ENCODE measurements at regions of chr9 and their contacts with region 1.

Region 1: DNA sequence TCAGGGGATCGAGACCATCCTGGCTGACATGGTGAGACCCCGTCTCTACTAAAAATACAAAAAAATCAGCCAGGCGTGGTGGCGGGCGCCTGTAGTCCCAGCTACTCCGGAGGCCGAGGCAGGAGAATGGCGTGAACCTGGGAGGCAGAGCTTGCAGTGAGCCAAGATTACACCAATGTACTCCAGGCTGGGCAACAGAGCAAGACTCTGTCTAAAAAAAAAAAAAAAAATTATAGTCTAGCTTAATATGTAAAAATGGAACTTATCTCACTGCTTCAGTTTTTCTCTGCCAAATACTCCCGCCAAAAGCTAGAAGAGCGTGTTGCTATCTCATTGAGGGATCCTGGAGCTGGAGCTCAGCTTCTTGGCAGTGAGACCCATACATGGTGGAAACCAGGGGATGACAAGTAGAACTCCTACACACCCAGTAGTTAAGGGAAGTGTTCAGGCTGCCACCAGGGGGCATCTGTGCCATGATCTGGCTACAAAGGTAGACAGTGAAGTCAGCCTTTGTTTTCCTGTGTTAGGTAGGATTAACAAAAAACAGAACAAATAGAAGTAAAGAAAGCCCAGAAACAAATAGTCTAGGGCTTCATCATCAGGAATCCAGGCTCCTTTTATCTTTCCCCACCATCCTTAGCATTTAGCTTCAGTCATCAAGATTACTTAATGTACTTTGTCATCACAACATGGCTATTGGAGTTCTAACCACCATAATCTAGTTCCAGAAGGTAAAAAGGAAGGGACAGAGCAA is 33.6 kb upstream of the GLIPR2 start:
- DNase-seq: peak; percentile 73 to 92 (median 85)
- ATAC-seq: peak; percentile 99 to 100 (median 100)
- H3K4me3 ChIP-seq: no peak overlapping the region
- H3K4me3 Mint-ChIP-seq: no peak overlapping the region
- H3K27ac ChIP-seq: no peak overlapping the region
- H3K27ac Mint-ChIP-seq: peak overlapping the region in 1 of 2 donors; percentile 16
- H3K4me1 ChIP-seq: no peaks in the 10 kb centered on the region
- H3K4me1 Mint-ChIP-seq: peaks cover 7 to 12% (median 7%) of the 10 kb centered on the region in 3 donors
- H3K27me3 ChIP-seq: no peaks in the 10 kb centered on the region
- H3K27me3 Mint-ChIP-seq: no peaks in the 10 kb centered on the region

Region 2: GRCh38 chr9:35566417-35566816 is 536.5 kb before region 1 on chr9:
- CTCF ChIA-PET with region 1: no interaction called
- POLR2A ChIA-PET with region 1: no interaction called
- DNase-seq: no peak
- ATAC-seq: no peak
- H3K4me3 ChIP-seq: no peak overlapping the region
- H3K4me3 Mint-ChIP-seq: no peak overlapping the region
- H3K27ac ChIP-seq: no peak overlapping the region
- H3K27ac Mint-ChIP-seq: no peak overlapping the region
- H3K4me1 ChIP-seq: peaks cover 0 to 5% of the 10 kb centered on the region in 2 experiments
- H3K4me1 Mint-ChIP-seq: peaks cover 0 to 15% (median 4%) of the 10 kb centered on the region in 3 donors
- H3K27me3 ChIP-seq: peaks cover 0 to 5% of the 10 kb centered on the region in 2 experiments
- H3K27me3 Mint-ChIP-seq: no peaks in the 10 kb centered on the region

Region 3: DNA sequence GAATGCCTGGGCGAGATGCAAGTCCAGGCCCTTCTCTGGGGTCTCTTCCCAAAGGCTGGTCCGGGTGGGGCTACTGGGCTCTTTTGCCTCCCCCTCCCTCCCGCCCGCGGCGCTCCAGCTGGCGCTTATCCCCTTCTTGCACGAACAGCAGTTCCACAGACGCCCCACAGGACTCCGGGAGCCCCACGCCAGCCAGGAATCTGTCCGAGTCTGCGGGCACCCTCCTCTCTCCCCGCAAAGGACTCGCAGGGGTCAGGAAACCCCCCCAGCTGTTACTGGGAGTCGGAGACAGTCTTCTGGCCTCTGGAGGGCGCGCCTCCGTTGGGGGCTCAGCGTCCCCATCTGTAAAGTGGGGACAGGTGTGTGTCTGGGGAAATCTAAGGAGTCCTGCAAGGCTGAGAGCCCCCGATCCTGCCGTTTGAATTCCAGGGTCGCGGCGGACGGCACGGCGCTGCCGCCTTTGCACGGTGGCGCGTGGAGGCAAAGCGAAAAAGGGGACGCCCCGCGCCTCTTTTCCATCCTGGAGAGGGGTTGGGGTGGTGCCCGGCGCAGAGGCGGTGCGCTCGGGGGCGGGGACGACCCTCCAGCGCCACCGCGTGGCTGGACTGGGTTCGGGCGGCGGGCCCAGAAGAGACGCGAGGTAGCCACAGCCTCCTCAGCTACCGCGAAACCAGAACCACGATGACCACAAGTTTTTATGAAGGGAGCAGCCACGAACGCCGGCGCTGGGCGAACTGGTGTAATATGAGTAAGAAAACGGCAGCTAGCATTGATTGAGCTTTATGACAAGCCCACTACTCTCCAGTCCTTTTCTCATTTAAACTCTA is 63.4 kb after region 1 on chr9:
- CTCF ChIA-PET with region 1: interaction called, 85 to 87 read pairs
- POLR2A ChIA-PET with region 1: interaction called, 4 to 6 read pairs
- DNase-seq: peak; percentile 35 to 89 (median 70)
- ATAC-seq: peak; percentile 96 to 98 (median 96)
- H3K4me3 ChIP-seq: peak overlapping the region; percentile 59 to 60
- H3K4me3 Mint-ChIP-seq: peak overlapping the region; percentile 63 to 78 (median 67)
- H3K27ac ChIP-seq: no peak overlapping the region
- H3K27ac Mint-ChIP-seq: peak overlapping the region in 1 of 2 donors; percentile 64
- H3K4me1 ChIP-seq: peaks cover 0 to 17% of the 10 kb centered on the region in 2 experiments
- H3K4me1 Mint-ChIP-seq: peaks cover 8 to 24% (median 9%) of the 10 kb centered on the region in 3 donors
- H3K27me3 ChIP-seq: peaks cover 0 to 4% of the 10 kb centered on the region in 2 experiments
- H3K27me3 Mint-ChIP-seq: no peaks in the 10 kb centered on the region

Region 4: DNA sequence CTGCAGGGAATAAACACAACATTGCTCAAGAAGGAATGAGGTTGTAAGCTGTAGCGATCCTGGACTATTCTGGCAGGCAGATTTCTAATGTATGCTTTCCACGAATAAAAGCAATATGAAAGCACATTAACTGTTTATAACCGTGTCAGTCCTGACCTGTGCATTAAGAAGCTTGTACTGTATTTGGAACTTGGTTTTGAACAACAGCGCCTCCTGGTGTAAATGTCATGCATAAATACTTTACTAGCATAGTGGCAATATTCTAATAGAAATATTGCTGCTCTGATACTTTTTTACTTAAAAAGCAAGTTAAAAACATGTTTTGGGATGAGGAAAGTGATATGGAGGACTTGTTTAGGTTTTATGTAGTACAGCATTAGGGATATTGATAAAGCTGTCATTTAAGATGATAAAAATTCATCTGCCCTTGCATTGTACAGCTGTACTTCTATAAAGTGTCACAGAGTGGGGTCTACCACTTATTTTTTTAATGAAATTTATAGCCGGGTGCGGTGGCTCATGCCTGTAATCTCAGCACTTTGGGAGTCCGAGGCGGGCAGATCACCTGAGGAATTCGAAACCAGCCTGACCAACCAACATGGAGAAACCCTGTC is 226.0 kb after region 1 on chr9:
- CTCF ChIA-PET with region 1: interaction called in 1 of 2 experiments, 10 read pairs
- POLR2A ChIA-PET with region 1: no interaction called
- DNase-seq: peak in 25 of 35 experiments; percentile 7 to 82 (median 30)
- ATAC-seq: peak; percentile 68 to 73 (median 70)
- H3K4me3 ChIP-seq: no peak overlapping the region
- H3K4me3 Mint-ChIP-seq: no peak overlapping the region
- H3K27ac ChIP-seq: no peak overlapping the region
- H3K27ac Mint-ChIP-seq: no peak overlapping the region
- H3K4me1 ChIP-seq: no peaks in the 10 kb centered on the region
- H3K4me1 Mint-ChIP-seq: peaks cover 3 to 7% (median 6%) of the 10 kb centered on the region in 3 donors
- H3K27me3 ChIP-seq: no peaks in the 10 kb centered on the region
- H3K27me3 Mint-ChIP-seq: no peaks in the 10 kb centered on the region

Region 5: GRCh38 chr9:37407470-37407869 is 1304.6 kb after region 1 on chr9:
- CTCF ChIA-PET with region 1: interaction called in 1 of 2 experiments, 11 read pairs
- POLR2A ChIA-PET with region 1: no interaction called
- DNase-seq: no peak
- ATAC-seq: no peak
- H3K4me3 ChIP-seq: no peak overlapping the region
- H3K4me3 Mint-ChIP-seq: no peak overlapping the region
- H3K27ac ChIP-seq: no peak overlapping the region
- H3K27ac Mint-ChIP-seq: no peak overlapping the region
- H3K4me1 ChIP-seq: peaks cover 0 to 15% of the 10 kb centered on the region in 2 experiments
- H3K4me1 Mint-ChIP-seq: peaks cover 4 to 27% (median 11%) of the 10 kb centered on the region in 3 donors
- H3K27me3 ChIP-seq: no peaks in the 10 kb centered on the region
- H3K27me3 Mint-ChIP-seq: no peaks in the 10 kb centered on the region